ENCODE measurements at regions of chr15 and their contacts with region 1.

Region 1: DNA sequence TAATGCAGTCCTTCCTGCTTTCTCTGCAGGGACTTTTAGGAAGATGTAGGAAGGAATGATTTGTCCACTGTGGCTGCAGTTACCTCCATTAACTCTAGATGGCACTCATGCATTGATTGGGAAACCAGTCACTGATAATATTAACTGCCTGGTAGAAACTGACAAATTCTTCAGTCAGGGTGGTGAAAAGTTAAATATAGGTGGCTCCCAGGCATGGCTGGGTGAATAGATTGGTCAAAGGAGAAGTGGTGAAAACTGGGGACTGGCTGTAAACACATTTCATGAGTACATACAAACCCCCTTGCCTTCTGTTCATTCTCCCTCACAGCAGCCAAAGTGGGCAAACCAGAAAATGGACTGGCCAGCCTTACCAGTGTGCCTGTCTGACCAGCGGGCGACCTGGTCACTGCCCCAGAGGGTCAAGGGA is 333.4 kb downstream of the THSD4 start:
- DNase-seq: peak in 3 of 10 donors; percentile 24 to 37 (median 30)

Region 2: DNA sequence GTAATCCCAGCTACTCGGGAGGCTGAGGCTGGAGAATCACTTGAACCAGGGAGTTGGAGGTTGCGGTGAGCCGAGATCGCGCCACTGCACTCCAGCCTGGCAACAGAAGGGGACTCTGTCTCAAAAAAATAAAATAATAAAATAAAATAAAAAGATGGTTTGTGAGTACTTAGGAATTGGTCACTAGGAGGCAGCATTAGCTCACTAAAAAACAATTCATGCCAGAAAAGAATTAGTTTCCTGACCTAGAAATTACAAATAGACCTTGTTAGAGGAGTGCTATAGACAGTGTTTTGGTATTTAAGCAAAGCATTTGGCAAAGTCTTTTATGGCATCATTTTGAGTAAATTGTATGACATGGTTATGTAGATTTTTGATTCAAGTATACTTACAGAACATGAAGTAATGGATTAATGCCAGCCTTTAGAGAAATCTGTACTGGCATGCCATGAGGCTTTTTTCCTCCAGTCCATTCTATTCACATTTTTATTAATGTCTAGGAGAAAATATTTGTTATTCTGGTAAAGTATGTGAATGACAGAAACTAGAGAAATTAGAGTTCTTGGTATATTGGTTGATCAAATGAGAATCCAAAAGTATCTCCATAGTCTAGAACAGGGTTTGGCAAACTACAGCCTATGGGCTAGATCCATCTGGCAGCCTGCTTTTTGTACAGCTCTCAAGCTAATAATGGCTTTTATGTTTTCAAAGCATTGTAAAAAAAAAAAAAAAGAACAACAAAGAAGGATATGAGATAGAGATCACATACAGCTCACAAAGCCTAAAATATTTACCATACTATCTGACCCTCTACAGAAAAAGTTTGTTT is 474.5 kb before region 1 on chr15:
- intact Hi-C with region 1: loop called (anchors 10 kb)
- DNase-seq: no peak

Region 3: GRCh38 chr15:71651750-71652186 is 203.1 kb after region 1 on chr15:
- intact Hi-C with region 1: loop called (anchors 2 kb)
- DNase-seq: peak in 3 of 10 donors; percentile 11 to 28 (median 16)

Region 4: GRCh38 chr15:71730277-71731144 is 281.8 kb after region 1 on chr15:
- intact Hi-C with region 1: loop called (anchors 1 kb)
- DNase-seq: peak in 3 of 10 donors; percentile 28 to 44 (median 41)

Region 5: GRCh38 chr15:71800835-71801745 is 352.4 kb after region 1 on chr15:
- intact Hi-C with region 1: loop called (anchors 2 kb)
- DNase-seq: peak in 3 of 10 donors; percentile 28 to 71 (median 39)